Vagina (tissue), 2 donors: ENCODE measurements at regions of chr17 and their contacts with region 1.

Region 1: GRCh38 chr17:59234631-59235030 is 14.3 kb downstream of the GDPD1 start:
- DNase-seq: no peak
- H3K4me3 ChIP-seq: no peak overlapping the region
- H3K27ac ChIP-seq: no peak overlapping the region
- H3K4me1 ChIP-seq: no peaks in the 10 kb centered on the region
- H3K27me3 ChIP-seq: no peaks in the 10 kb centered on the region
- CTCF ChIP-seq: no peak
- POLR2A ChIP-seq: no peak

Region 2: GRCh38 chr17:59178266-59178978 is 56.2 kb before region 1 on chr17:
- intact Hi-C with region 1: no loop called
- DNase-seq: no peak
- H3K4me3 ChIP-seq: no peak overlapping the region
- H3K27ac ChIP-seq: no peak overlapping the region
- H3K4me1 ChIP-seq: no peaks in the 10 kb centered on the region
- H3K27me3 ChIP-seq: no peaks in the 10 kb centered on the region
- CTCF ChIP-seq: no peak
- POLR2A ChIP-seq: no peak

Region 3: DNA sequence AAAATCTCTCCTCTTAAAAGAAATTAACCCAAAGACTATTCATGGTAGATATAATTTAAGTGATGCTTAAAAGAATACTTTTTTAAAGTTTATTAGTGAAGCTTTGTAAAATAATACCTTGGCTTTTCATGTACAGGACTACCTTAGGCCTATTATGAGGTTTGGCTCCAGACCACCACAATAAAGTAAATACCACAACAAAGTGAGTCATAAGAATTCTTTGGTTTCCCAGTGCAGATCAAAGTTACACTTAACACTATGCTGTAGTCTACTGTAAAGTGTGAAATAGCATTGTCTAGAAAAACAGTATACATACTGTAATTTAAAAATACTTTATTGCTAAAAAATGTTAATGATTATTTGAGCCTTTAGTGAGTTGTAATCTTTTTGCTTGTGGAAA is 416.7 kb after region 1 on chr17:
- intact Hi-C with region 1: loop called (anchors 5 kb)
- DNase-seq: no peak
- H3K4me3 ChIP-seq: no peak overlapping the region
- H3K27ac ChIP-seq: no peak overlapping the region
- H3K4me1 ChIP-seq: peaks cover 10% of the 10 kb centered on the region
- H3K27me3 ChIP-seq: no peaks in the 10 kb centered on the region
- CTCF ChIP-seq: no peak
- POLR2A ChIP-seq: no peak